GM12878 (cell line): ENCODE measurements at regions of chr2 and their contacts with region 1.

Region 1: DNA sequence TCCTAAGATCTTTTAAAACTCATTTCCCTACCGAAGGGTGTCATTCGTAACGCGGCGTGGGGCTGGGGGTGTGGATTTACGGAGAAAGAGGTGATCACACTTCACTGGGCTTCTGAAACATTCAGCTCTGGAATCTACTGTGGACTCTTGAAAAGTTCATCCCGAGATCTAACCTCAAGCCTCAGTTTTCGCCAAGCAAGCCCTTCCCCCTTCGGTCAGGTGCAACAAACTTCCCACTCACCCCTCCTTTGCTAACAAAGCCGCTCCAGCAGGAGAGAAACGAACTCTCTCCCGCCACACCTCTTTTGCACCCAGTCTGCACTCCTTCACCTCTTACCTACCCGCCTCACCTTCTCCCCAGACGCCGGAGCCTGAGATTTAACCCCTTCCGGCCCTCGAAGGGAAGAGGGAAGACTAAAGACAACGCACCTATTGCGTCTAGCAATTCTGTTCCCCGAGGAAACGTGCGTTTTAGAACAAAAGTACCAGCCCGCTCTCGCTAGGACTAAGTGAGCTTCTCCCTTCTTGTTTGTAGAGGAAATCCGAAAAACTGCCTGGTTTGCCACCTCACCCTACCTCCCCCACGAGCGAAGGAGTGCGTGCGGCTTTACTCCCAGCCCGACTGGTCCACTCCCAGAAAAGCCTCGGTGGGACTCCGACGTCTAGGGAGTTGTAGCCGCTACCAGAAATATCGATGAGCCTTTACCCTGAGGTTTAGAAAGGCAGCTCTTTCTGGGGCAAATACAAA is 538 bp upstream of the PEX13 start:
- DNase-seq: peak; percentile 68
- ATAC-seq: peak; percentile 80
- H3K4me3 ChIP-seq: peak overlapping the region; percentile 97
- H3K27ac ChIP-seq: peak overlapping the region; percentile 96
- H3K4me1 ChIP-seq: peaks cover 4% of the 10 kb centered on the region; the same call in 1 of the 2 replicates
- H3K27me3 ChIP-seq: no peaks in the 10 kb centered on the region
- CTCF ChIP-seq: no peak
- EP300 ChIP-seq: no peak
- POLR2A ChIP-seq: 0 out of 2 replicates have a peak, but pooled peaks have one; percentile 21
- RAD21 ChIP-seq: no peak

Region 2: DNA sequence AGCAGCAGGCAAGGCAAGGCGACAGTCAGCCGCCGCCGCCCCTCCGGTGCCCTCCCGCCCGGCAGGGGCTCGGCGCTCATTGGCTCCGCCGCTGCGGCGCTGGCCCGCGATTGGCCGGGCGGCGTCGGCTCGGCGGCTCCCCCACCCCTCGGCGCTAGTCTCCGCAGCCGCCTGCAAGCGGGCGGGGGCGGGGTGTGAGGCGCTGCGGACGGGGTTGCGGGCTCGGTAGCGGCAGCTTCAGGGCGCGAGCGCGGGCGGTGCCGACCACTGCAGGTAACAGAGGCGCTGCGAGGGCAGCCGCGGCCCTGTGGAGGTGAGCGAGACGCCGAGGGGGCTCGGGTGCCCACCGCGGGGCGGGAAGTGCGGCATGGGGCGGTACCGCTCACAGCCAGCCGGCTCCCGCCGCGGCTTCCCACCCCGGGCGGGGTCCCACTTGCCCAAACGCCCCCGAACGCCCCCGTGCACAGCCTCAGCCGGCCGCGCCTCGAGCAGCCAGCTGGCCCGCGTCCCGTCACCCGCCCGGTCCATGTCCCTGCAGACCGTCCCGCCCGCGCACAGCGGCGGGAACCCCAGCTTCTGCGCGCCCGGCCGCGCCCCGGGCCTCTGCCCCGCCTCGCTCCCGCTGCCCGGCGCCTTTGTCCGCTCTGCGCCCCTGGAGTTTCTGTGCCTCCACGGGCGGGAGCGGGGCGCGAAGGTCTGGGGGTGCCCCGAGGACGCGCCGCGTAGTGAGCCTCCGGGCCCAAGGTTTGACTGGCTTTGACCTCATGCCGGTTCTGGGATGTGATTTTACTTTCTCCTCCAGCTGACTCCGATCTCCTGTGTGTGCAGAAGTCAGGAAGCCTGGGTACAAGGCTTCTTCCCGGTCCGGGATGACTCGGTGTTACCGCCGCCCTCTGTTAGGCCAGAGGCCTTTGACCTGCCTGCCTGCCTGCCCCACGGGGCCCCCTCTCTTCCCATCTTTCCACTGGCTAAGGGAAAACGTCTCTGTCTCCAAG is 49.0 kb after region 1 on chr2 and contains the start of gene SANBR:
- CTCF ChIA-PET with region 1: no interaction called
- POLR2A ChIA-PET with region 1: no interaction called
- RAD21 ChIA-PET with region 1: interaction called, 3 read pairs
- SMC1A ChIA-PET with region 1: no interaction called
- in situ Hi-C with region 1: no loop called
- intact Hi-C with region 1: loop called (anchors 5 kb)
- DNase-seq: peak; percentile 34
- ATAC-seq: peak; percentile 99
- H3K4me3 ChIP-seq: peak within 1 kb of the TSS; percentile 88
- H3K27ac ChIP-seq: peak within 1 kb of the TSS; percentile 46
- H3K4me1 ChIP-seq: no peaks in the 10 kb centered on the region
- H3K27me3 ChIP-seq: no peaks in the 10 kb centered on the region
- CTCF ChIP-seq: no peak
- EP300 ChIP-seq: no peak
- POLR2A ChIP-seq: peak; percentile 81
- RAD21 ChIP-seq: no peak
- polyA plus RNA-seq, gene SANBR: 2.2 to 3.1 TPM